ENCODE measurements at regions of chr11 and their contacts with region 1.

Region 1: DNA sequence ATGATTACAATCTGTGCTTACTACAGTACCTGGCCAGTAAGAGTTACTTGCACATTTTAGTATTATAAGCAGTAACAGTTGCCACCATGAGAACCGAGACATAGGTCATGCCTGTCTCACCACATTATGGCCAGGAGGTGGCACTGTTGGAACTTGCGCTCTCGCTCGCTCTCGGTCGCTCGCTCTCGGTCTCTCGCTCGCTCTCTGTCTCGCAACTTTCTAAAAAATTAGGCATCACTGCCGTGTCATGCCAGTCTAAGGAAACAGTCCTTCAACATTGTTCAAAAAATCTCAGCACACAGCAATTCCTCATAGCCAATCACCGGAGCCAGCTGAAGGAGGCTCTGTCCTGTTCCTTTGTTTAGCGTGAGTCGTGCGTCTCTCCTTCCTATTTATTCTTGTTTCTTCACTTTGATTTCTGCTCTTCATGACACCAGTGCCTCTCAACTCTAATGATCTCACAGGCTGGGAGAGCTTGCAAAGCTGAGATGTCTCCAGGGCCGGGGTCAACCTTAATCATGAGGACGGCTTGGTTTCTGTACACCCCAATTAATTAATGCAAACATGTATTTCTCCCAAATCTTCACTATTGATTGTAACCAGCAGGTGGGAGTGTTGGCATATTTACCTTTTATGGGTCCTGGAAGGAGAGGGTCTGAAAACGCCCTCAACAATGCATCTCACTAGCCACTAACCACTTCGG is 6.3 kb upstream of the ADAMTS8 start:
- DNase-seq: peak; percentile 80 to 87
- H3K4me3 ChIP-seq: peak overlapping the region; percentile 46
- H3K4me3 Mint-ChIP-seq: no peak overlapping the region
- H3K27ac Mint-ChIP-seq: no peak overlapping the region
- H3K4me1 ChIP-seq: no peaks in the 10 kb centered on the region
- H3K4me1 Mint-ChIP-seq: no peaks in the 10 kb centered on the region
- H3K27me3 ChIP-seq: peaks cover 7% of the 10 kb centered on the region
- H3K27me3 Mint-ChIP-seq: peaks cover 31% of the 10 kb centered on the region
- CTCF ChIP-seq: peak; percentile 88 to 98

Region 2: GRCh38 chr11:130390071-130390758 is 44.5 kb before region 1 on chr11:
- CTCF ChIA-PET with region 1: interaction called, 5 read pairs
- POLR2A ChIA-PET with region 1: no interaction called
- intact Hi-C with region 1: loop called (anchors 1 kb)
- DNase-seq: peak in 1 of 2 experiments; percentile 47
- H3K4me3 ChIP-seq: no peak overlapping the region
- H3K4me3 Mint-ChIP-seq: no peak overlapping the region
- H3K27ac Mint-ChIP-seq: no peak overlapping the region
- H3K4me1 ChIP-seq: peaks cover 6% of the 10 kb centered on the region
- H3K4me1 Mint-ChIP-seq: peaks cover 15% of the 10 kb centered on the region
- H3K27me3 ChIP-seq: no peaks in the 10 kb centered on the region
- H3K27me3 Mint-ChIP-seq: no peaks in the 10 kb centered on the region
- CTCF ChIP-seq: peak in 1 of 2 experiments; percentile 67

Region 3: GRCh38 chr11:130561441-130561881 is 126.8 kb after region 1 on chr11:
- CTCF ChIA-PET with region 1: no interaction called
- POLR2A ChIA-PET with region 1: no interaction called
- intact Hi-C with region 1: loop called (anchors 5 kb)
- DNase-seq: no peak
- H3K4me3 ChIP-seq: no peak overlapping the region
- H3K4me3 Mint-ChIP-seq: no peak overlapping the region
- H3K27ac Mint-ChIP-seq: no peak overlapping the region
- H3K4me1 ChIP-seq: peaks cover 17% of the 10 kb centered on the region
- H3K4me1 Mint-ChIP-seq: peaks cover 20% of the 10 kb centered on the region
- H3K27me3 ChIP-seq: no peaks in the 10 kb centered on the region
- H3K27me3 Mint-ChIP-seq: no peaks in the 10 kb centered on the region
- CTCF ChIP-seq: no peak

Region 4: DNA sequence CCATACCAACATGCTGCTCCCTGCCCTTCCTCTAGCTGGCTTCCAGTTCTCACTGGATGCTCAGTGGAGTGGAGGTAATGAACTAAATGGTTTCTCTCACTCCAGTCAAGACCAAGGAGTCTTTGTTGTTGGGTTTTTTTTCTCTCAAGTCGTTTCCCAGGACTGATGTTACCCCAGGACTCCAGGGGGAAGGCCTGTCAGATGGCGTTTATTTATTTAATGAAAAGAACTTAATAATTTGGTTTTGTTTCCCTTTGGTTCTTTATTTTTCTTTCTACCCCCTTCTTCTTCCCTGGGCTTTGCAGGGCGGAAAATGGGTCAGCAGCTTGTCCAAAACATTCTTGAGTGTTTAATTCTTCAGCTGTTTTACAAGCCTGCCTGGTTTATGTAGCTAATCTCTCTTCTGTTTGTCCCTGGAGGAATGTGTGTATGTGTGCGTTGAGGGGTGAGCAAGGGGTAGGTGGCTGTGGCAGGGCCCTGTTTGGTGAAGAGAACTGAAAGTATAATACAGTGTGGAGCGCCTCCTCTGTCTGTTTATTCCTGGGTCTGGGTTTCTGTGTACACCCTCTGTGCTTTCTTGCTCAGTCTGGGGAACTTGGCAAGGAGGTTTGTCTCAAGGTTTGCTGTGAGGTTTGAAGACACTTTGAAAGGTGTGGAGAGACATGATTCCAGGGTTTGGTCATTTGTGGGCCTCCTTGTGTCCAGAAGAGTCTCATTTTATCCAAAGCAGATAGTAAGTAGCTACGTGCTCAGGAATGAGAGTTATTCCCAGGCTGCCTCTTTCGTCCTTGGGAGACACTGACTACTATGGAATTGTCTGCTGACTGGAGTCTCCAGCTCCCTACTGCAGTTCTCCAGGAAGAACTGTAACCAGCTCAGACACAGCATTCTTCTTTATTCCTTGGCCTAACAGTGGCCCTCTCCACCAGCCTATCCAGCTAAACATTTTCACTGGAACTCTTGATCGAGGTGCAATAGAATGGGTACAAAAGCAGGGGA is 189.3 kb after region 1 on chr11:
- CTCF ChIA-PET with region 1: interaction called, 4 read pairs
- POLR2A ChIA-PET with region 1: no interaction called
- intact Hi-C with region 1: loop called (anchors 1 kb)
- DNase-seq: no peak
- H3K4me3 ChIP-seq: no peak overlapping the region
- H3K4me3 Mint-ChIP-seq: no peak overlapping the region
- H3K27ac Mint-ChIP-seq: no peak overlapping the region
- H3K4me1 ChIP-seq: no peaks in the 10 kb centered on the region
- H3K4me1 Mint-ChIP-seq: no peaks in the 10 kb centered on the region
- H3K27me3 ChIP-seq: no peaks in the 10 kb centered on the region
- H3K27me3 Mint-ChIP-seq: peaks cover 32% of the 10 kb centered on the region
- CTCF ChIP-seq: peak in 1 of 2 experiments; percentile 16

Region 5: GRCh38 chr11:130827451-130828377 is 393.0 kb after region 1 on chr11:
- CTCF ChIA-PET with region 1: interaction called, 7 read pairs
- POLR2A ChIA-PET with region 1: no interaction called
- intact Hi-C with region 1: loop called (anchors 1 kb)
- DNase-seq: peak; percentile 66 to 76
- H3K4me3 ChIP-seq: no peak overlapping the region
- H3K4me3 Mint-ChIP-seq: no peak overlapping the region
- H3K27ac Mint-ChIP-seq: no peak overlapping the region
- H3K4me1 ChIP-seq: no peaks in the 10 kb centered on the region
- H3K4me1 Mint-ChIP-seq: no peaks in the 10 kb centered on the region
- H3K27me3 ChIP-seq: no peaks in the 10 kb centered on the region; the same call in none of the 2 replicates
- H3K27me3 Mint-ChIP-seq: peaks cover 12% of the 10 kb centered on the region
- CTCF ChIP-seq: peak; percentile 42 to 77

Region 6: GRCh38 chr11:130894322-130895025 is 459.8 kb after region 1 on chr11:
- CTCF ChIA-PET with region 1: interaction called, 10 read pairs
- POLR2A ChIA-PET with region 1: no interaction called
- intact Hi-C with region 1: loop called (anchors 1 kb)
- DNase-seq: peak; percentile 78 to 83
- H3K4me3 ChIP-seq: no peak overlapping the region
- H3K4me3 Mint-ChIP-seq: no peak overlapping the region
- H3K27ac Mint-ChIP-seq: no peak overlapping the region
- H3K4me1 ChIP-seq: no peaks in the 10 kb centered on the region; the same call in 1 of the 2 replicates
- H3K4me1 Mint-ChIP-seq: no peaks in the 10 kb centered on the region
- H3K27me3 ChIP-seq: no peaks in the 10 kb centered on the region
- H3K27me3 Mint-ChIP-seq: no peaks in the 10 kb centered on the region
- CTCF ChIP-seq: peak; percentile 96 to 97